ENCODE measurements at regions of chr21 and their contacts with region 1.

Region 1: GRCh38 chr21:17987382-17988101 is 168.4 kb upstream of the C21orf91 start:
- DNase-seq: no peak
- ATAC-seq: no peak

Region 2: DNA sequence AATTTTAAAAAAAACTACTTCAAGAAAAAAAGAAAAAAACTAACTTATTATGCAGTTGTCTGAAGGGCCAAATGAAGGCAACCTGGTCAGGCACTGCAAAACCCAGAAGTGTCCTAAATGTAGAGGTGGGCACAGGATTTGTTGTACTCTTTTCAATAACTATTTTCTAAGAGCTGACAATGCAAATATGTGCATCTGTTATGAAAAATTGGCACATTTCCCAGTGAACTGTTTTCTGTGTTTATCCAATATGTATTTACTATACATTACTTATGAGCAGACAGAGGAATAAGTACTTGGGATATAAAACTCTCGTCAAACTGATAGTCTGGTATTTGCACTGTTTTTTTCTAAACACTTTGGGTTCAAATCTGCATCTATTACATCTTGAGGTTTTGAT is 19.6 kb after region 1 on chr21:
- intact Hi-C with region 1: loop called (anchors 2 kb)
- DNase-seq: no peak
- ATAC-seq: no peak

Region 3: GRCh38 chr21:18070392-18070791 is 82.8 kb after region 1 on chr21:
- intact Hi-C with region 1: no loop called
- DNase-seq: no peak
- ATAC-seq: no peak